PC-3 (cell line): ENCODE measurements at regions of chr16 and their contacts with region 1.

Region 1: GRCh38 chr16:68995011-68995504 is 110.4 kb upstream of the HAS3 start:
- DNase-seq: peak; percentile 70
- ATAC-seq: peak; percentile 20; the same call in 1 of the 2 replicates
- H3K4me3 ChIP-seq: no peak overlapping the region
- H3K27ac ChIP-seq: peak overlapping the region; percentile 96
- H3K4me1 ChIP-seq: peaks cover 41% of the 10 kb centered on the region
- H3K27me3 ChIP-seq: no peaks in the 10 kb centered on the region
- CTCF ChIP-seq: peak; percentile 58

Region 2: DNA sequence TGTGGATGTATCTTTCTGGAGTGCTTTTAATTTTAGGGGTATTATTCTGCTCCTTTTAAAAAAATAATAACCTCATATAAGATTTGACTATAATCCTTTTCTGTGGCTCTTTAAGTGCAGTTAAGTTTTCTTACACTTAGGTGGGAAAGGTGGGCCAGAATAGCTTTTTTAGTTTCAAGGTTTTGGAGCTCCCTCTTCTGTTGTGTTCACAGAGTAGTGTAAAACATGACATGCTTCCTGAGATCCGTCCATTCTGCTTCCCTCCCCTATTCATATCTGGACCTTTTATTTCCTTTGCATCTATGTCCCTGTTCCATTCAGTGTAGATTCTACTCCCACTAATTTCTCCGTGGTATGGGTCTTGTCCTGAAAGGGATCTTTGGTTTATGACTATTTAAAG is 1655.6 kb before region 1 on chr16:
- CTCF ChIA-PET with region 1: no interaction called
- POLR2A ChIA-PET with region 1: no interaction called
- intact Hi-C with region 1: no loop called
- DNase-seq: peak; percentile 31
- ATAC-seq: peak; percentile 51
- H3K4me3 ChIP-seq: no peak overlapping the region
- H3K27ac ChIP-seq: no peak overlapping the region
- H3K4me1 ChIP-seq: no peaks in the 10 kb centered on the region; the same call in 1 of the 2 replicates
- H3K27me3 ChIP-seq: no peaks in the 10 kb centered on the region
- CTCF ChIP-seq: peak; percentile 45

Region 3: DNA sequence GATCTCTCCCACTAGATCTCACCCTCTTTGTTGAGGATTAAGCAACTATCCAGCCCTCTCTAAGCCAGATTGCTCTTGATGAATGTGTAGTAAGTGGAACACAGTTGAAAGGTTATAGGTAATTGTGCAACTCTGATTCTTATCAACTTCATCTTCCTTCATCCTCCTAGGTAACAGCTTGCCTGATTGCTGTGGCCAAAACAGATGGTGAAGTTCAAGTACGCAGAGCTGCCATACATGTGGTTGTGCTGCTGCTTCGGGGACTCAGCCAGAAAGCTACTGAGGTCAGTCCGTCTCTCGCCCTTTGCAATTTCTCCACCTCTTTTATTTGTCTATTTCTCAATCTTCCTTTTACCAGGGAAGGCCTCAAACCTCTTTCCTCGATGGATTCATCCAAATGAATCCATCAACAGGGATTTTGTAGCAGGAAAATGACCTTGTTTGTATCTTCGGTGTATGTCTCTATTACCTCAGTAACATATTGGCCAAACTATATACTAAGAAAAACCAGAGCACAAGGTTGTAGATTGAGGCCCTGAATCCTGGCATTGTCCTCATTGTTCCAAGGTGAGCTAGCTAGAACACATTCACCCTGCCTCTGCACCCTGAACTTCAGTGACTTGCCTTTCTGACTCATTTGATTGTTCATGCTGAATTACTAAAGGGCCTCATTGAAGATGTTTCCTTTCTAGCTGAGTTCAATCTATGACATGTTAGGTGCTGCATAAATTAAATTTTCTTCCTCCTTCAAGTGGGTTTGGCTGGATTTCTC is 45.3 kb after region 1 on chr16:
- CTCF ChIA-PET with region 1: no interaction called
- POLR2A ChIA-PET with region 1: no interaction called
- intact Hi-C with region 1: no loop called
- DNase-seq: peak; percentile 57
- ATAC-seq: peak; percentile 55
- H3K4me3 ChIP-seq: no peak overlapping the region
- H3K27ac ChIP-seq: peak overlapping the region; percentile 72
- H3K4me1 ChIP-seq: peaks cover 18% of the 10 kb centered on the region
- H3K27me3 ChIP-seq: no peaks in the 10 kb centered on the region
- CTCF ChIP-seq: no peak

Region 4: DNA sequence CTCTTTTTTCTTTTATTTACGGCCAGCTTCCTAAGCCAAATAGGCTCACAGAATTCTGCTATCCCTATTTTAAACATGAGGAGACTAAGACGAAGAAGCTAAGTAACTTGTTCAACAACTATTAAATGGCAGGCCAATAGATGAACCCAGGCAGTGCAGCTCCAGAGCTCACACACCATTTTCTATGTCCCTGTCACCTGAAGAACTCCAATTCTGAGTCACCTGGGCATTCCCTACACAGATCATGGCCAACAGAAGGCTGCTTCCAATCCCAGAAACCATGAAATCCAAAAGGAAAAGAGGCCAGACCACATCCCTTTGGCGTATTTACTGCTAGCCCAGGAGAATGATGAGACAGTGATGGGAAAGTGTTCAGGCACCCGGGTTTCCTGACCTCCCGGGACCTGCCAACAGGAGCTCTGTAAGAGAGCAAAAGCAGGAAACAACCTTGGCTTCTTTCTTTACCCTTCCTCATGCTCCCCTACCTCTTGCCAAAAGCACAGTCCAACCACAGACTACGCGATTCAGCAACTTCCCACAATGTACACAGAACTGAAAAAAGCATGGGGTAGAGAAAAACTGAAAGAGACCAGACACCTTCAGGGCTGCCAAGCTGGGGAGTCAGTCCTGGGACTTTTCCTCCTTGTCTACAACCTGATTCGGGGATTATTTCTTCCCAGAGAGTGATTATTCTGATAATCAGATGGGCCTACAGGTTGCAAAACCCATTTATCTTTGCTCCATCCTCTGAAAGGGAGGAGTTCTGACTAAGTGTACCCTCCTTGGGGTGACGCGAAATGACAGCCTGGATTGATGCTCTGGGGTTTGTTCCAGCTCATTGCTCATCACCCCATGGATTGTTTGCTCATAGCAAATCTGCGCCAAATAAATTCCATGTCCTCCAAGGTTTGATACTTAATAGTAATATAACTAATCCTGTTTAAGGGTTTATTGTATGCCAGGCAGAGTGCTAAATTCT is 62.6 kb after region 1 on chr16:
- CTCF ChIA-PET with region 1: no interaction called
- POLR2A ChIA-PET with region 1: interaction called, 5 read pairs
- intact Hi-C with region 1: loop called (anchors 2 kb)
- DNase-seq: peak; percentile 93
- ATAC-seq: peak; percentile 91
- H3K4me3 ChIP-seq: peak overlapping the region; percentile 21; the same call in 1 of the 2 replicates
- H3K27ac ChIP-seq: peak overlapping the region; percentile 99
- H3K4me1 ChIP-seq: peaks cover 29% of the 10 kb centered on the region
- H3K27me3 ChIP-seq: no peaks in the 10 kb centered on the region
- CTCF ChIP-seq: no peak